ENCODE measurements at regions of chrX and their contacts with region 1.

Region 1: GRCh38 chrX:109714340-109714958 is 18.6 kb downstream of the ACSL4 start:
- DNase-seq: peak in 1 of 3 donors; percentile 34
- H3K4me3 ChIP-seq: no peak overlapping the region
- H3K4me3 Mint-ChIP-seq: no peak overlapping the region
- H3K27ac ChIP-seq: no peak overlapping the region
- H3K27ac Mint-ChIP-seq: peak overlapping the region in 2 of 7 donors; percentile 6 to 56
- H3K4me1 ChIP-seq: peaks cover 47 to 54% of the 10 kb centered on the region in 2 donors
- H3K4me1 Mint-ChIP-seq: peaks cover 47% of the 10 kb centered on the region
- H3K27me3 ChIP-seq: peaks cover 0 to 3% of the 10 kb centered on the region in 2 donors
- H3K27me3 Mint-ChIP-seq: peaks cover 0 to 16% (median 0%) of the 10 kb centered on the region in 3 donors
- CTCF ChIP-seq: no peak

Region 2: GRCh38 chrX:109660435-109661143 is 53.9 kb before region 1 on chrX:
- intact Hi-C with region 1: no loop called
- DNase-seq: no peak
- H3K4me3 ChIP-seq: no peak overlapping the region
- H3K4me3 Mint-ChIP-seq: no peak overlapping the region
- H3K27ac ChIP-seq: no peak overlapping the region
- H3K27ac Mint-ChIP-seq: peak overlapping the region in 1 of 7 donors; percentile 12
- H3K4me1 ChIP-seq: no peaks in the 10 kb centered on the region
- H3K4me1 Mint-ChIP-seq: peaks cover 6% of the 10 kb centered on the region
- H3K27me3 ChIP-seq: no peaks in the 10 kb centered on the region
- H3K27me3 Mint-ChIP-seq: no peaks in the 10 kb centered on the region
- CTCF ChIP-seq: no peak

Region 3: DNA sequence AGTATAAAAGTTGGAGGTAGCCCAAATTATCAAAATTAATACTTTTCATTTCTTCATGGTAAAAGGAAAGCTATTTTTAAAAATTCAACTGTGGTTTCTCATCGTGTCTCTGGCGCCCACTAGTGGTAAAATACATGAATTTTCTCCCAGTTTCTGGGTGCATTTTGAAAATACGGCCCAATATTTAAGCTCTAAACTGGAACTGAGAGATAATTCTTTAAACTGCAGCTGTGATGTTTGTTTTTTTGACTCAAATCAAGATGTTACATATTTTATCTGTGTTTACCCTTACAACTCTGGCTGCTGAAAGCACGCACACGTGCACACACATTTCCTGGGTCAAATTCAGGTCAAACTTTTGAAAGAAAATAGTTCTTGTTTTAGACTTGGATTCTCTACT is 142.5 kb after region 1 on chrX:
- intact Hi-C with region 1: loop called (anchors 10 kb)
- DNase-seq: peak; percentile 23 to 37 (median 28)
- H3K4me3 ChIP-seq: peak overlapping the region in 1 of 3 experiments; percentile 27
- H3K4me3 Mint-ChIP-seq: peak overlapping the region in 1 of 2 donors; percentile 51
- H3K27ac ChIP-seq: peak overlapping the region in 1 of 2 donors; percentile 25
- H3K27ac Mint-ChIP-seq: peak overlapping the region; percentile 35 to 86 (median 77)
- H3K4me1 ChIP-seq: peaks cover 29 to 31% of the 10 kb centered on the region in 2 donors
- H3K4me1 Mint-ChIP-seq: peaks cover 22% of the 10 kb centered on the region
- H3K27me3 ChIP-seq: peaks cover 0 to 13% of the 10 kb centered on the region in 2 donors
- H3K27me3 Mint-ChIP-seq: peaks cover 0 to 17% (median 0%) of the 10 kb centered on the region in 3 donors
- CTCF ChIP-seq: peak; percentile 77

Measured in CD14-positive monocyte (primary cell).